Gastrocnemius medialis (tissue), 4 donors: ENCODE measurements at regions of chr11 and their contacts with region 1.

Region 1: DNA sequence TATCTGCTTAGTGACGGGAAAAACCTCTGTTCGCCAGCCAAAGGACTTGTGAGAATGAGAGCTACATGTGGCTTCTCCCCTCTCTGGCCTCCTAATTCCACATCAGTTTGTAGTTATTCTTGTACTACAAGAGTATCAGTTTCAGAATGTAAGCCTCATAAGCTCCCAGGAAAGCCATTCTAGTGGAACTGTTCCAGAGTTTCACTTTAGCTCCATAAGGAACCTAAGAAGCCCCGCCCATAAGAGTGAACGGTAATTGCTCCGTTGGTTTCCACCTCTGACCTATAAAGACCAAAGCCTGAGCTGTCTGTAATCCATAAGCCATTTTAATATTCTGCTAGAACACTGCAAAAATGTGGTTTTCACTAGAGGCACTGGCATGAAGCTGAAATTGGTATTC is 53.0 kb downstream of the SIK3 start:
- DNase-seq: peak in 1 of 2 donors; percentile 17
- ATAC-seq: peak; percentile 90 to 91
- H3K4me3 ChIP-seq: peak overlapping the region in 2 of 4 donors; percentile 5 to 19
- H3K27ac ChIP-seq: peak overlapping the region; percentile 58 to 70 (median 65)
- H3K4me1 ChIP-seq: peaks cover 50 to 53% of the 10 kb centered on the region in 2 donors
- H3K27me3 ChIP-seq: no peaks in the 10 kb centered on the region
- CTCF ChIP-seq: no peak
- POLR2A ChIP-seq: no peak

Region 2: GRCh38 chr11:117026593-117027330 is 18.4 kb before region 1 on chr11:
- in situ Hi-C with region 1: no loop called
- intact Hi-C with region 1: loop called (anchors 1 kb)
- DNase-seq: no peak
- ATAC-seq: no peak
- H3K4me3 ChIP-seq: no peak overlapping the region
- H3K27ac ChIP-seq: no peak overlapping the region
- H3K4me1 ChIP-seq: peaks cover 5 to 13% of the 10 kb centered on the region in 2 donors
- H3K27me3 ChIP-seq: no peaks in the 10 kb centered on the region
- CTCF ChIP-seq: no peak
- POLR2A ChIP-seq: no peak

Region 3: DNA sequence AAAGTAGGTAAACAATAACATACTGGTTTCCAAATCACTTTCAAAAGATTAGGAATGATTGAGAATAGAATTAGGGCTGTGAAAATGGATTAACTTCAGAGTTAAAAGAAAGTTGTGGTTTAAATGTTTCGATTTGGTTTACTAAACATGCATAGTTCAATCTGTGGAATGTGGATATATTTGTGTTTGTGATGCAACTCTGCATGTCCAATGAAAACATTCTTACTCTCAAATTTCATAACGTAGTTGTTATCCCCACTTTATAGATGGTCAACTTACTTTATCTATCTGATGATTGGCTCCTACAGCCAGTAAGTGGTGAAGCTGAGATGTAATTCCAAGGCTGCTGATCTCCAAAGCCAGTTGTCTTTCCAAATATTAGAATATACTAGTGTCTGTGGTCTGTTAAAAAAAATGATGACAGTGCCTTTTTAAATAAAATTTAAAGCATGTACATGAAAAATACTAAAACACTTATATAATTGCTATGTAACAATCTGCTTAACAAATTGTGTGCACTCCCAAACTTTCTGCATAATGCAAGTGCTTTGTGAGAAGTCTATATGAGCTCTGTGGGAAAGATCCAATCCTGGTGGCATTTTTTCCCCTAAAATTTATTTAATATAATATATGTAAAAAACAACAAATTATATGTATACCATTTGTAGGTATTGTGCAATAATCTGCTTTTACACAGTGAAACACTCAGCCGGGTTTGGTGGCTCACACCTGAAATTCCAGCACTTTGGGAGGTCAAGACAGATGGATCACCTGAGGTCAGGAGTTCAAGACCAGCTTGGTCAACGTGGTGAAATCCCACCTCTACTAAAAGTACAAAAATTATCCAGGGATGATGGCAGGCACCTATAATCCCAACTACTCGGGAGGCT is 62.8 kb after region 1 on chr11:
- in situ Hi-C with region 1: no loop called
- intact Hi-C with region 1: no loop called
- DNase-seq: no peak
- ATAC-seq: no peak
- H3K4me3 ChIP-seq: no peak overlapping the region
- H3K27ac ChIP-seq: no peak overlapping the region
- H3K4me1 ChIP-seq: no peaks in the 10 kb centered on the region
- H3K27me3 ChIP-seq: no peaks in the 10 kb centered on the region
- CTCF ChIP-seq: no peak
- POLR2A ChIP-seq: no peak

Region 4: GRCh38 chr11:117127171-117127901 is 82.1 kb after region 1 on chr11:
- in situ Hi-C with region 1: no loop called
- intact Hi-C with region 1: no loop called
- DNase-seq: no peak
- ATAC-seq: no peak
- H3K4me3 ChIP-seq: no peak overlapping the region
- H3K27ac ChIP-seq: no peak overlapping the region
- H3K4me1 ChIP-seq: no peaks in the 10 kb centered on the region
- H3K27me3 ChIP-seq: no peaks in the 10 kb centered on the region
- CTCF ChIP-seq: no peak
- POLR2A ChIP-seq: no peak